ENCODE measurements at regions of chr3 and their contacts with region 1.

Region 1: DNA sequence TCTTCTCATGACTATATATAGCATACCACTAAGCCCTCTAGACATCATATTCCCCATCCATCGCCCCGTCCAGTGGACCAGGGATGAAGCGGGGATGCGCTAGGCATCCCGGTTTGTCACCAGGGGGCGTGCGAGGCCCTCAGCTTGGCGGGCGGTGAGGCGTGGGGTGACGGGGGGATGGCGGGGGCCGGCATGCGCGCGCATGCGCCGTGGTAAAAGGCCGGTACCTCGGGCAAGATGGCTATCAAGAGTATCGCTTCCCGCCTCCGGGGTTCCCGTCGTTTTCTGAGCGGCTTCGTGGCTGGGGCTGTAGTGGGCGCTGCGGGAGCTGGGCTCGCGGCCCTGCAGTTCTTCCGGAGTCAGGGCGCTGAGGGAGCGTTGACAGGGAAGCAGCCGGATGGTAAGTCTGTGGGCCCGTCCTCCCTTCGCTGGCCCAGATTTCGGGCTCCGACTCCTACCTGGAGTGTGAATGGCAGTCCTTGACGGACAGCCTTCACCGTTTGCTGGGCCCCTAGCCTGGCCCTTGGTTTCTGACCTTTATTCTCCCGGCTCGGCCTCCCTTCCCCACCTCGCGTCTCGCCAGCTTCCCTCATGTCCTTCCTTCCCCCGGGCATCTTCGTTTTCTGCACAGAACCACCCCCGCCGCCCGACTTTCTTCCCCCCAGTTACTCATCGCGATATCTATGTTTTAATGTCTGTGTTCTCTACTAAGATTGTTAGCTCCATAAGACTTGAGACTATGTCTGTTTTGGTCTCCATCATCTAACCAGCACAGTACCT is at the start of gene EXOG:
- DNase-seq: peak; percentile 79 to 93 (median 89)
- ATAC-seq: peak; percentile 98
- H3K4me3 ChIP-seq: peak within 1 kb of the TSS; percentile 92
- H3K4me3 Mint-ChIP-seq: peak within 1 kb of the TSS; percentile 82 to 98 (median 95)
- H3K27ac ChIP-seq: peak within 1 kb of the TSS; percentile 75
- H3K27ac Mint-ChIP-seq: peak within 1 kb of the TSS; percentile 20 to 94 (median 86)
- H3K4me1 ChIP-seq: peaks cover 0 to 8% of the 10 kb centered on the region in 2 donors
- H3K4me1 Mint-ChIP-seq: peaks cover 4 to 29% (median 24%) of the 10 kb centered on the region in 7 donors
- H3K27me3 ChIP-seq: no peaks in the 10 kb centered on the region
- H3K27me3 Mint-ChIP-seq: no peaks in the 10 kb centered on the region
- total RNA-seq, gene EXOG: 20.4 to 31.0 (median 21.3) TPM

Region 2: GRCh38 chr3:36993326-36994283 is 1502.7 kb before region 1 on chr3 and contains the start of gene MLH1:
- CTCF ChIA-PET with region 1: no interaction called
- POLR2A ChIA-PET with region 1: no interaction called
- intact Hi-C with region 1: loop called in 1 of 2 experiments (anchors 1 kb)
- DNase-seq: peak; percentile 91 to 100 (median 99)
- ATAC-seq: peak; percentile 90
- H3K4me3 ChIP-seq: peak within 1 kb of the TSS; percentile 80
- H3K4me3 Mint-ChIP-seq: peak within 1 kb of the TSS in 1 of 10 donors; percentile 26
- H3K27ac ChIP-seq: peak within 1 kb of the TSS; percentile 83
- H3K27ac Mint-ChIP-seq: no peak within 1 kb of the TSS
- H3K4me1 ChIP-seq: peaks cover 36 to 40% of the 10 kb centered on the region in 2 donors
- H3K4me1 Mint-ChIP-seq: peaks cover 23 to 43% (median 38%) of the 10 kb centered on the region in 7 donors
- H3K27me3 ChIP-seq: no peaks in the 10 kb centered on the region
- H3K27me3 Mint-ChIP-seq: no peaks in the 10 kb centered on the region
- total RNA-seq, gene MLH1: 26.4 to 42.0 (median 31.7) TPM

Region 3: DNA sequence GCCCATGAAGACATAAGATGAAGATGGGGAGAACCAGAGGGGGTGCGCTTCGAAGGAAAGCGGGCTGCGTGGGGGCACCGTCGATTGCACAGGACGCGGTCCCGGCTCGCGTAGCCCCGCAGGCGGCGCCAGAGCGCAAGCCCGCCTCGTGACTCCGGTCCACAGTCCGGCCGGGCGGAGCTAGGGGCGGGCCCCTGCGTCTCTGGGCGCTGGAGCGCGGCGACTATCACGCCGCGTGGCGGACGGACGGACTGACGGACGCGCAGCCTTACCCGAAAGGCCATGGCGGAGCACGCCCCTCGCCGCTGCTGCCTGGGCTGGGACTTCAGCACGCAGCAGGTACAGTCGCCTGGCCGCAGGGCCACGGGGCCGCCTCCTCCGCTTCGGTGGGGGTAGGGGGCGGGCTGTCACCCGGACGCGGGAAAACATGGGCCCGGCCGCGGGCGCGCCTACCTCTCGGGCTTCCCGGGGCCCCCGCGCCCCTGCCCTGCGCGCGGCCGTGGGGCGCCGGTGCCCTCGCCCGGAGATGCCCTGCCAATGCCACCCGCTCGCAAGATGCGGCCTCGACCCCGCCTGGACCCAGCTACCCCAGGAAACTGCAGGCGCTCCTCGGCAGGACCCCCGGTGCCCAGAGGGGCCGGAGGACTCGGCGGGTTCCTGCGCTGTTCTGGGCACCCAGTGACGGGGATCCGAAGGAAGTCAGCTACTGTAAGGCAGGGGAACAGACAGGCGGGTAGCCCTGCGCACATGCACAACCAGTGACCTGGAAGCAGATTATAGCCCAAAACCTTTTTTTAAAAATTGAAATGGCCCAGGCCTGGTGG is 149.5 kb before region 1 on chr3 and contains the start of gene XYLB:
- CTCF ChIA-PET with region 1: no interaction called
- POLR2A ChIA-PET with region 1: no interaction called
- intact Hi-C with region 1: loop called in 1 of 2 experiments (anchors 5 kb)
- DNase-seq: peak; percentile 48 to 89 (median 67)
- ATAC-seq: peak; percentile 99
- H3K4me3 ChIP-seq: peak within 1 kb of the TSS; percentile 62
- H3K4me3 Mint-ChIP-seq: peak within 1 kb of the TSS; percentile 71 to 91 (median 83)
- H3K27ac ChIP-seq: peak within 1 kb of the TSS; percentile 61
- H3K27ac Mint-ChIP-seq: peak within 1 kb of the TSS in 3 of 9 donors; percentile 54 to 61 (median 54)
- H3K4me1 ChIP-seq: no peaks in the 10 kb centered on the region
- H3K4me1 Mint-ChIP-seq: peaks cover 2 to 7% (median 5%) of the 10 kb centered on the region in 7 donors
- H3K27me3 ChIP-seq: no peaks in the 10 kb centered on the region
- H3K27me3 Mint-ChIP-seq: peaks cover 0 to 4% (median 0%) of the 10 kb centered on the region in 5 donors
- total RNA-seq, gene XYLB: 1.00 to 6.7 (median 2.1) TPM

Region 4: DNA sequence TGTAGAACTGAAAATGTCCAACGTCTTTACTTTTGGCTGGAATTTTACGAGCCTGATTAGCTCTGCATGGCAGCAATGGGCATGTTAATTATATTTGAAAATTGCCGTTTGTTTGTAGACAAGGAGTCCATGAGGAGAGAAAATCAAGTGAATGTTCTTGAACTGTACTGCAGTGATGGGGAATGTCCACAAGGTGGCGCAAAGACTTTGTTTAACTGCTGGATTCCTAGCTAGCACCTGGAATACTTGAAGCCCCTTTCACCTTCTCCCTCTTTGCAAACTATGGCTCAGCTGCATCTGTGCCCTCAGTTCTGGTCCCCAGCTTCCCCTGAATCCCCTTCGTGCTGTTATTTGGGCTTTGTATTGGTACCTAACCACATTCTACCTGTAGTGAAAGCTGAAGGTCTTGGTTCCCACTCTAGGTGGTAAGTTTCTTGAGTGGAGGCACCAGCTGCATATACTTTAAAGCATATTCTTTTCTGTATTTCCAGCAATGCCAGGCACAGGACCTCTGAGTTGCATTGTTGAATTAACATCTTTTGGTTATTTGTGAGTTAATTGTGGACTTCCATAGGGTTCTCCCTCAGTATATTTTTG is 25.2 kb after region 1 on chr3:
- CTCF ChIA-PET with region 1: interaction called, 15 read pairs
- POLR2A ChIA-PET with region 1: interaction called, 3 read pairs
- intact Hi-C with region 1: loop called (anchors 1 kb)
- DNase-seq: peak in 8 of 9 donors; percentile 34 to 66 (median 58)
- ATAC-seq: peak; percentile 83
- H3K4me3 ChIP-seq: no peak overlapping the region
- H3K4me3 Mint-ChIP-seq: peak overlapping the region in 1 of 10 donors; percentile 12
- H3K27ac ChIP-seq: no peak overlapping the region
- H3K27ac Mint-ChIP-seq: peak overlapping the region in 4 of 9 donors; percentile 2 to 92 (median 35)
- H3K4me1 ChIP-seq: peaks cover 21 to 30% of the 10 kb centered on the region in 2 donors
- H3K4me1 Mint-ChIP-seq: peaks cover 12 to 45% (median 35%) of the 10 kb centered on the region in 7 donors
- H3K27me3 ChIP-seq: no peaks in the 10 kb centered on the region
- H3K27me3 Mint-ChIP-seq: no peaks in the 10 kb centered on the region

Region 5: GRCh38 chr3:38707730-38708129 is 211.4 kb after region 1 on chr3:
- CTCF ChIA-PET with region 1: no interaction called
- POLR2A ChIA-PET with region 1: no interaction called
- intact Hi-C with region 1: loop called in 1 of 2 experiments (anchors 2 kb)
- DNase-seq: no peak
- ATAC-seq: no peak
- H3K4me3 ChIP-seq: no peak overlapping the region
- H3K4me3 Mint-ChIP-seq: no peak overlapping the region
- H3K27ac ChIP-seq: no peak overlapping the region
- H3K27ac Mint-ChIP-seq: no peak overlapping the region
- H3K4me1 ChIP-seq: no peaks in the 10 kb centered on the region
- H3K4me1 Mint-ChIP-seq: no peaks in the 10 kb centered on the region
- H3K27me3 ChIP-seq: no peaks in the 10 kb centered on the region
- H3K27me3 Mint-ChIP-seq: peaks cover 0 to 30% (median 26%) of the 10 kb centered on the region in 5 donors

Region 6: DNA sequence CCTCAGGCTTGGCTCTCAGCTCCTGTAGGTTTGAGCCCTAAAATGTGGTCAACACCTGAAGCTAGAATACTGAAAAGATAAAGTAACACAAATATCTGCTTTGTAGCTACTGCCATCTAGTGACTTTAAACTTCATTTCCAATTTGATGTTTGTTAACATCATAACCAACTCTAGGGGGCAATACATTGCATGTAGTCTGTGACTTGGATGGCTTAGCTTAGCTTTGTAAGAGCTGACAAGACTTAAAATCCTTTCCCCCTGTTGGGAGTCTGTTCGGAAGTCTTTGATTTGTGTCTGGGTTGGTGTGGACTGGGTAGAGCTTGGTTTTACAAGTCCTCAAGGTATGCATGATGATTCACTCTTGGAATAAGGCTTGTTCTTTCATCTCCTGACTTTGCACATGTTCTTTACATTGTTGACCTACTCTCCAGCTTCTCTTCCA is 503.7 kb after region 1 on chr3:
- CTCF ChIA-PET with region 1: interaction called, 6 read pairs
- POLR2A ChIA-PET with region 1: no interaction called
- intact Hi-C with region 1: loop called in 1 of 2 experiments (anchors 5 kb)
- DNase-seq: peak in 6 of 9 donors; percentile 14 to 39 (median 32)
- ATAC-seq: peak; percentile 50
- H3K4me3 ChIP-seq: no peak overlapping the region
- H3K4me3 Mint-ChIP-seq: no peak overlapping the region
- H3K27ac ChIP-seq: no peak overlapping the region
- H3K27ac Mint-ChIP-seq: no peak overlapping the region
- H3K4me1 ChIP-seq: no peaks in the 10 kb centered on the region
- H3K4me1 Mint-ChIP-seq: peaks cover 0 to 2% (median 0%) of the 10 kb centered on the region in 7 donors
- H3K27me3 ChIP-seq: no peaks in the 10 kb centered on the region
- H3K27me3 Mint-ChIP-seq: peaks cover 5 to 16% (median 13%) of the 10 kb centered on the region in 5 donors

Region 7: DNA sequence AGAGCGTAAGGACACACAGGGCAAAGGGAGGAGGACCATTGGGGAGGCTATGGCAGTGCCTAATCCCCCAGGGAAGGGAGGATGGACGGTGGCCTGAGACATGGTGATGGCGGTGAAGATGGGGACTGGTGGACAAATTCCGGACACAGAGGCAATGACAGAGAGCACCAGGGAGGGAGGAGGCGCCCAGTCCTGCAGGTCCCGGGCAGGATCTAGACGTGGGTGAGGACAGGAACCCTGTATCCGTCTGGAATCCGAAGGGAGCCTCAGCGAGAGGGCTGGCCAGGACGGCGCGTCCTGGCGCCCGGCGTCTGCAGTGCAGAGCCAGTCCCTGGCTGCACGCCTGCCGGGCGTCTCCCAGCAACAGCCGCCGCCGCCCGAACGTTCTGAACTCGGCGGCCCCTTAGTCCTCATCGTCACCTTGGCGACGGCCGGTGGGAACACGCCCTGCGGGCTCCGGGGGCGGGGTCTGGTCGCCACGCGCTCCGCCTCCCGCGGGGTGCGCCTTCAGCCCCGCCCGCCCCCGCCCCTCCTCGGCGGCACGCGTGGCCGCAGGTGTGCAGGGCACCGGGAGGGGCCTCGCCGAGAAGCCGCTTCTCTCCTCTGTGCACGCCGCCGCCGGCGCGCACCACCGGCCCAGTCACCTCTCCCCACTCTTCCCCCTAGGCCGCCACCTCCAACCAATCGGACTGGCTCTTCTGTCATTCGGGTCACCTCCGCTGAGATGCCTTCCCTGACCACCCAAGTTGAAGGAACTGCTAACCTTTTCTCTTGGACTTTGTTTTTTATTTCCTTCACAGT is 684.4 kb after region 1 on chr3:
- CTCF ChIA-PET with region 1: no interaction called
- POLR2A ChIA-PET with region 1: no interaction called
- intact Hi-C with region 1: loop called in 1 of 2 experiments (anchors 10 kb)
- DNase-seq: peak; percentile 80 to 86 (median 83)
- ATAC-seq: peak; percentile 94
- H3K4me3 ChIP-seq: peak overlapping the region; percentile 74
- H3K4me3 Mint-ChIP-seq: peak overlapping the region; percentile 79 to 94 (median 87)
- H3K27ac ChIP-seq: peak overlapping the region; percentile 68
- H3K27ac Mint-ChIP-seq: peak overlapping the region; percentile 71 to 94 (median 88)
- H3K4me1 ChIP-seq: peaks cover 23 to 33% of the 10 kb centered on the region in 2 donors
- H3K4me1 Mint-ChIP-seq: peaks cover 24 to 51% (median 38%) of the 10 kb centered on the region in 7 donors
- H3K27me3 ChIP-seq: no peaks in the 10 kb centered on the region
- H3K27me3 Mint-ChIP-seq: no peaks in the 10 kb centered on the region

Region 8: DNA sequence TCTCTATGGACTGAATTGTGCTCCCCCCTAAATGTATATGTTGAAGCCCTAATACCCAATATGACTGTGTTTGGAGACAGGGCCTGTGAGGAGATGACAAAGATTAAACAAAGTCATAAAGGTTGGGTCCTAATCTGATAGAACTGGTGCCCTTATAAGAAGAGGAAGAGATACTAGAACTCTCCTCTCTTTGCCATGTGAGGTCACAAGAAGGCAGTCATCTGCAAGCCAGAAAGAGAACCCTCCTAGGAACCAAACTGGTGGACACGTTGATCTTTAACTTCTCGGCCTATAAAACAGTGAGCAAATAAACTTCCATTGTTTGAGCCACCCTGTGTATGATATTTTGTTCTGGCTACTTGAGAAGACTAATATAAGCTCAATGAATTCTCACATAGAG is 1859.1 kb after region 1 on chr3:
- CTCF ChIA-PET with region 1: no interaction called
- POLR2A ChIA-PET with region 1: no interaction called
- intact Hi-C with region 1: no loop called
- DNase-seq: no peak
- ATAC-seq: no peak
- H3K4me3 ChIP-seq: no peak overlapping the region
- H3K4me3 Mint-ChIP-seq: no peak overlapping the region
- H3K27ac ChIP-seq: no peak overlapping the region
- H3K27ac Mint-ChIP-seq: no peak overlapping the region
- H3K4me1 ChIP-seq: no peaks in the 10 kb centered on the region
- H3K4me1 Mint-ChIP-seq: peaks cover 0 to 3% (median 0%) of the 10 kb centered on the region in 7 donors
- H3K27me3 ChIP-seq: no peaks in the 10 kb centered on the region
- H3K27me3 Mint-ChIP-seq: peaks cover 9 to 45% (median 14%) of the 10 kb centered on the region in 5 donors

Measured in naive thymus-derived CD4-positive, alpha-beta T cell (primary cell).